ENCODE measurements at regions of chr3 and their contacts with region 1.

Region 1: DNA sequence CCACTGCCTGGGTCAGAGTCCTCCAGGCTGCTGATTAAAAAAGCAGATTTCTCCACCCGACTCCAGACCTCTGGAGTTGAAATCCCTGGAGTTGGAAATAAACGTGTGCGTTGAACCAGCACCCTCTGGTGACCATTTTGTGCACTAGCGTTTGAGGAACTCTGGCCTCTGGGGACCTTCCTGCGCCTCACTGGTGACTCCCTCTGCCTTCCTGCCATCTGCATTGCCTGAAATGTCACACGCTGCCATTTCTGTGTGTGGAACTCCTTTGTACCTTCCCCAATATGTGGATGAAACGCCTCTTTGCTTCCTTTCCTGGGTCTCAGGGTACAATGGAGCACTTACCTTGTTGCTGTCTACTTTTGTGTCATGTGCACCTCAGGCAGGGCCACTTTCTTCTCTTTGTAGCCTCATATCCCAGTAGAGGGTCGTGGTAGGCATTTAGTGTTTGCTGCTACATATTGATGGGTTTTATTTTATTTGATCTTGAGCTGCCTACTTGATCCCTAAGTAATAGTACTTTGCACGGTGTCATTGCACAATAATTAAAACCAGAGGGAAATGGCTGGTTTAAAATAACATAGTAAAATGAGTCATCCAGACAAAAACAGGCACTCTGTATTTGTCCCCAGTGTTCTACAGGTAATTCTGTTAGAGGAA is 56.8 kb downstream of the GPR171 start:
- DNase-seq: peak; percentile 72
- ATAC-seq: peak; percentile 92

Region 2: DNA sequence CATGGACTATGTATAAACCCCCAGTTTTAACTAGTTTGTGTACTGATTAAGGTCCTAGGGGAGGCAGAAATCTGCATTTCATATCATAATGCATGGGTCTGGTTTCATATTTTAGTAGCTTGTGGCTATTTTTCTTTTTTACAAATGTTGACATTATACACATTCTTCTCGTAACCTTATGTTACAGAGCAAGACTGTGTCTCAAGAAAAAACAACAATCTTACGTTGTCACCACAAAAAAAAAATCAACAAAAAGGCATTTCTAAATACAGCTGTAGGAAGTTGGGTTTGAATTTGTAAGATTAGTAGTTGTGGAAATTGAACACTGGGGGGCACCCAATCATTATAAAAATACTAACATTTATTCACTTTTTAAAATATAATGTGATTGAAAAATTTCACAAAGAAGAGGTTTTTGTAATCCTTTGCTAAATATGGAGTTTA is 617.8 kb before region 1 on chr3:
- intact Hi-C with region 1: loop called (anchors 10 kb)
- DNase-seq: no peak
- ATAC-seq: no peak

Region 3: DNA sequence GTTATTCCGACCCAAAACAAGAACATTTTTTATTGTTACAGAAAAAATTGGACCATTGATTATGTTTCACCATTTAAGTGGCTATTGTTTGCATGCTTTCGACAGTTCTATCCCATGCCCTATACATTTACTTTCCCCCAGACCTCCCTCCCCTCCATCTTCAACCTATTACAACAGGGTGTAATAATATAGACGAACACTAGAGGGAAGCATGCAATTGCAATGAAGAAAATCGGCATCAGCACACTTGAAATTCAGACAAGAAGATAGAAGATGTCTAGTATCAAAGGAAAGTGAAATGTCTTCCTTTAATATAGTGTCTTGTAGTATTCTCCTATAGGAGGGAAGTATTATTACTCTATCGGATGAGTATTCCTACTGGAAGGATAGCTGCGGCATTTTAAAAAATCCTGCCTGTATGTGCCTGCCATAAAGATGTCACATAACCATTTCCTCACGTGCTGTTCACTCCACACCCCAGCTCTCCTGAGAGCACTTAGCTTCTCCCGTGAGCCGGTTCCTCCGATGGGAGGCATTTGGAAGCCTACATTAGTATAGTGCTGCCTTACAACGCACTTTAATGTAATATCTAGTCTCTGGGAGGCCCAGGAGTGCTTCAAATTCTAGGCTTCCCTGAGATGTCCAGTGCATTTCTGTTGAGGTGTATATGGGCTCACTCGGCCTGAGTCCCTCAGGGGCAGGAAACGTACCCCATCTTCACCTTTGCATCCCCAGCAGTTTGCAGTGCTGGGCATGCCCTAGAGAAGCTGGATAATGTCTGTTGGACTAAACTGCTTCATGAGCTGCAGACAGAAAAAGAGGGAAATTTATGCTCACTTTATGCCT is 424.7 kb before region 1 on chr3:
- intact Hi-C with region 1: loop called (anchors 2 kb)
- DNase-seq: no peak
- ATAC-seq: peak; percentile 70

Region 4: GRCh38 chr3:150787741-150788370 is 358.3 kb before region 1 on chr3:
- intact Hi-C with region 1: loop called (anchors 1 kb)
- DNase-seq: peak; percentile 92
- ATAC-seq: peak; percentile 79

Region 5: GRCh38 chr3:150925751-150926201 is 220.4 kb before region 1 on chr3:
- intact Hi-C with region 1: loop called (anchors 5 kb)
- DNase-seq: no peak
- ATAC-seq: peak; percentile 56

Region 6: DNA sequence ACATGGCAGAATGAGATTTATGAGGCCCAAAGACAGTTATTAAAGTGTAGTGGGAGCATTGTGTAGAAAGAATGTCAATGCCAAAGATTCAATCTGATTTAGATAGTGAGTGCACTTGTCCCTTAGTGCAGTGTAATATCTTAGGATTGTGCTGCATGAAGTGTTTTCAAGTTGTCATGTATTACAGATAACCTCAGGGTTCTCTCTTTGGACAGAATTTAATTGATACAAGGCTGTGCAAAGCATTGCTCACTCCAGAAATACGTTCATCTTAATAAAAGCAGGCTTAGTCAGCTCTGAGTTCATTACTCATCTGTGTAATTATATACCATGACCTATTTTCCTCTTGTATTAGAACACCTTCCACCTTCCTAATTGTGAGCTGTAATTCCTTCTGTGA is 72.9 kb after region 1 on chr3:
- intact Hi-C with region 1: no loop called
- DNase-seq: no peak
- ATAC-seq: no peak

Measured in Right ventricle myocardium inferior (tissue), 1 donor.